ENCODE measurements at regions of chr16 and their contacts with region 1.

Region 1: GRCh38 chr16:11407047-11407982 is 62.1 kb downstream of the RMI2 start:
- DNase-seq: peak; percentile 78
- ATAC-seq: peak; percentile 50
- H3K4me3 Mint-ChIP-seq: no peak overlapping the region
- H3K27ac Mint-ChIP-seq: no peak overlapping the region
- H3K4me1 Mint-ChIP-seq: peaks cover 4% of the 10 kb centered on the region
- H3K27me3 Mint-ChIP-seq: peaks cover 3% of the 10 kb centered on the region

Region 2: GRCh38 chr16:10988164-10988803 is 419.0 kb before region 1 on chr16:
- CTCF ChIA-PET with region 1: no interaction called
- DNase-seq: peak; percentile 93
- ATAC-seq: peak; percentile 89
- H3K4me3 Mint-ChIP-seq: peak overlapping the region; percentile 61
- H3K27ac Mint-ChIP-seq: peak overlapping the region; percentile 88
- H3K4me1 Mint-ChIP-seq: peaks cover 87% of the 10 kb centered on the region
- H3K27me3 Mint-ChIP-seq: no peaks in the 10 kb centered on the region

Region 3: DNA sequence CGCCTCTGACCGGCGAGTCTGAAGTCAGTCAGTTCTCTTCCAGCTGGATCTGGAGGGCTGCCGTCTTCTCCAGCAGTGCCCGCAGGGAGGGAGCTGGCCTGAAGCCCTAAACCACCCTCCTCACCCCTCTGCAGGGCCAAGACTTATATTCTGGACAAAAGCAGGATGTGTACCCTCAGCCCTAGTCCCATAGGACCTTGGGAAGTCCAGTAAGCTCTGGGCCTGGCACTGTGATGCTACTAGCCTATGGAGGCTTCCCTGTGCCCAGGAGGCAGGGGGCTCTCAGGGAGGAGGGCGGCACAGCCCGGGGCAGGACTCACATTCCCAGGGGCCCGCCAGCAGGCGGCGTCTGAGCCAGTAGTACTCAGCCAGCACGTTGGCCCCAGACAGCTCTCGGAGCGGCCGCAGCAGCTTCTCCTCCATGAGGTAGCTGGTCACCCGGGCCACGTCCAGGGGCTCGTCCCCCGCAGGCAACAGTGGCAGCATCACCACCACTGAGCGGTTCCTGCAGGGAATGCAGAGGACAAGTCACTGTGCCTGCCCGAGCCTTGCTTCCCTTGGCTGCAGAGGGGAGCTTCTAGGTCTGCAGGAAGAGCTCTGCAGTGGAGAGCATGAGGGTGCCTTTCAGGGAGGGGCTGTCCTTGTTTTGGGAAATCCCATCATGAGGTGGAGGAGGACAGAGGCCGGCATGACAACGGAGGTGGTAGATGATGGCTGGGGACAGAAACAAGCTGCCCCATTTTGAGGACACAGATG is 20.3 kb before region 1 on chr16:
- CTCF ChIA-PET with region 1: interaction called, 29 read pairs
- DNase-seq: no peak
- ATAC-seq: no peak
- H3K4me3 Mint-ChIP-seq: no peak overlapping the region
- H3K27ac Mint-ChIP-seq: no peak overlapping the region
- H3K4me1 Mint-ChIP-seq: peaks cover 19% of the 10 kb centered on the region
- H3K27me3 Mint-ChIP-seq: no peaks in the 10 kb centered on the region

Region 4: GRCh38 chr16:11425140-11425539 is 17.8 kb after region 1 on chr16:
- CTCF ChIA-PET with region 1: interaction called, 16 read pairs
- DNase-seq: no peak
- ATAC-seq: no peak
- H3K4me3 Mint-ChIP-seq: no peak overlapping the region
- H3K27ac Mint-ChIP-seq: no peak overlapping the region
- H3K4me1 Mint-ChIP-seq: peaks cover 10% of the 10 kb centered on the region
- H3K27me3 Mint-ChIP-seq: peaks cover 6% of the 10 kb centered on the region

Region 5: GRCh38 chr16:11452746-11453389 is 45.6 kb after region 1 on chr16:
- CTCF ChIA-PET with region 1: no interaction called
- DNase-seq: no peak
- ATAC-seq: no peak
- H3K4me3 Mint-ChIP-seq: no peak overlapping the region
- H3K27ac Mint-ChIP-seq: no peak overlapping the region
- H3K4me1 Mint-ChIP-seq: no peaks in the 10 kb centered on the region
- H3K27me3 Mint-ChIP-seq: peaks cover 14% of the 10 kb centered on the region

Region 6: GRCh38 chr16:11611871-11612664 is 204.8 kb after region 1 on chr16:
- CTCF ChIA-PET with region 1: no interaction called
- DNase-seq: no peak
- ATAC-seq: no peak
- H3K4me3 Mint-ChIP-seq: no peak overlapping the region
- H3K27ac Mint-ChIP-seq: no peak overlapping the region
- H3K4me1 Mint-ChIP-seq: peaks cover 19% of the 10 kb centered on the region
- H3K27me3 Mint-ChIP-seq: peaks cover 20% of the 10 kb centered on the region

Measured in activated CD8-positive, alpha-beta memory T cell treated with anti-CD3 and anti-CD28 coated beads, Interleukin-2, amount 10 ng/mL, durations not matched to agents 7 days and 5 days (primary cell).